Activated CD4-positive, alpha-beta memory T cell treated with anti-CD3 and anti-CD28 coated beads for 36 hours (primary cell): ENCODE measurements at regions of chr14 and their contacts with region 1.

Region 1: GRCh38 chr14:64012720-64013119 is 159.9 kb downstream of the SYNE2 start:
- DNase-seq: no peak
- H3K4me3 Mint-ChIP-seq: no peak overlapping the region
- H3K27ac Mint-ChIP-seq: no peak overlapping the region
- H3K4me1 Mint-ChIP-seq: peaks cover 9% of the 10 kb centered on the region
- H3K27me3 Mint-ChIP-seq: no peaks in the 10 kb centered on the region

Region 2: DNA sequence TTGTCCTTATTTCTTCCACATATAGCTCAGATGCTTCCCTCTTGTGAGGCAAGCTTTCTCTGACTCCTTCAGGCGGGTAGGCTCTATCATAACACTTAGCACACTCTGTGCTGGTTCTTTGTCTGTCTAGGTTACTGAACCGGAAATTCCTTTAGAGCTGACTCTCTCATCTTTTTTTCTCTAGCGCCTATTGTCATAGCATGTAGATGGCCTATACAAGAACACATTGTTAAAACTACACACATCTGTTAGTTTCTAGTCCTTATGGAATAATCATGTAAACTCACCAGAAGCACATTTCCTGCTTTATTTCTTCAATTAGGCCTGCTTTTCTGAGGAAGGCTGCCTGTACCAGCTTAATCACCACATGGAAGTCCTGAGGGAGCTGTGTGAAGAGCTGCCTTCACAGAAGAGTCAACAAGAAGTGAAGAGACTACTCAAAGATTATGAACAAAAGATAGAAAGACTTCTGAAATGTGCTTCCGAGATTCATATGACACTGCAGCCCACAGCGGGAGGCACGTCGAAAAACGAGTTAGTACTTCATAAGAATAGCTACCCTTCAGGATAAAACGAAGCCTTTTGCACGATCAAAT is 16.0 kb before region 1 on chr14:
- CTCF ChIA-PET with region 1: interaction called, 10 read pairs
- POLR2A ChIA-PET with region 1: no interaction called
- intact Hi-C with region 1: no loop called
- DNase-seq: no peak
- H3K4me3 Mint-ChIP-seq: no peak overlapping the region
- H3K27ac Mint-ChIP-seq: no peak overlapping the region
- H3K4me1 Mint-ChIP-seq: peaks cover 5% of the 10 kb centered on the region
- H3K27me3 Mint-ChIP-seq: no peaks in the 10 kb centered on the region

Region 3: DNA sequence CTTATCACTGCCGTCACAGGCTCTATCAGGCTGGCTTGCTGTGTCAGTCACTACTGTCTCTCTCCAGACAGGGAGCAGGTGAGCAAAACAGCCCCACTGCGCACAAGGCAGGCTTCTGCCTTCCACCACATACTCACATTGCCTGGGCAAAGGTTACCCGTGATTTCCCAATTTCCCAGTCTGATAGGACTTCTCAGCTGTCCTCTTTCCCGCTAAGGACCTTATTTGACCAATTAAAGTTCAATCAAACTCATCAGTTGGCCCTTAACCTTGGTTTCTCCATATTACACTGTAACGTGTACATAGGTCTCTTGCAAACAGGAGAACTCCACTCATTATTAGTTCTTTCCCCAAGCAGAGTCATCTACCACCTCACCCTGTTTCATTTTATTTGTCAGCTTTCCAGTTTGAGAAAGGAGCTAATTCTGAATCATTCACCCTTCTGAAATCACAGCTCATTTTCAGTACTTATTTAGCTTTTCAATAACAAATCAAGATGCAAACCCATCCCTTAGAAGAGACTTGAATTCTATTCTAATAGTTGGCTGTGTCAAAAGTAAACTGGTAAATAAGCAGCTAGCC is 110.6 kb after region 1 on chr14:
- CTCF ChIA-PET with region 1: no interaction called
- POLR2A ChIA-PET with region 1: no interaction called
- intact Hi-C with region 1: loop called (anchors 5 kb)
- DNase-seq: no peak
- H3K4me3 Mint-ChIP-seq: no peak overlapping the region
- H3K27ac Mint-ChIP-seq: peak overlapping the region; percentile 64
- H3K4me1 Mint-ChIP-seq: peaks cover 16% of the 10 kb centered on the region
- H3K27me3 Mint-ChIP-seq: no peaks in the 10 kb centered on the region